MCF 10A (cell line): ENCODE measurements at regions of chr20 and their contacts with region 1.

Region 1: DNA sequence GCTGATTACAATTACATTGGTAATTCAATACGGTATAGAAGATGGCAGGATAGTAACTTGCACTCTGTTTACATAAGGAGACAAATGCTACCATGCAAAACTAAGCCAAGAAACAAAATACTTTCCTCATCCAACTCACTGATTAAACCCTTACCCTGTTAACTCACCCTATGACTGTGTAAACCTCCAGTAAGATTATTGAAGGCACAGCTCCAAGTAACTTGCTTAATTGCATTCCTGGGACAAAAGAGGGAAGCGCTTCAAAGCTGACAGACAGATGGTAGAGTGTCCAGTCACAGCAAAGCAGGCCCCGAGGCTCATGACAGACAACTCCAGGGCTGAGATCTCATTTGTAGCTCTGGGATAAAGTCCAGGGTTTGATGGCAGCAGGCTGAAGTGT is 6.9 kb upstream of the KIF16B start:
- DNase-seq: peak; percentile 92
- H3K4me3 Mint-ChIP-seq: peak overlapping the region; percentile 30
- H3K27ac Mint-ChIP-seq: peak overlapping the region; percentile 6
- H3K4me1 Mint-ChIP-seq: peaks cover 23% of the 10 kb centered on the region
- H3K27me3 Mint-ChIP-seq: no peaks in the 10 kb centered on the region
- CTCF ChIP-seq: no peak

Region 2: GRCh38 chr20:16528078-16528477 is 52.1 kb before region 1 on chr20:
- CTCF ChIA-PET with region 1: interaction called, 3 read pairs
- POLR2A ChIA-PET with region 1: interaction called, 35 read pairs
- intact Hi-C with region 1: no loop called
- DNase-seq: peak; percentile 94
- H3K4me3 Mint-ChIP-seq: peak overlapping the region; percentile 40
- H3K27ac Mint-ChIP-seq: peak overlapping the region; percentile 91
- H3K4me1 Mint-ChIP-seq: peaks cover 34% of the 10 kb centered on the region
- H3K27me3 Mint-ChIP-seq: no peaks in the 10 kb centered on the region
- CTCF ChIP-seq: no peak

Region 3: DNA sequence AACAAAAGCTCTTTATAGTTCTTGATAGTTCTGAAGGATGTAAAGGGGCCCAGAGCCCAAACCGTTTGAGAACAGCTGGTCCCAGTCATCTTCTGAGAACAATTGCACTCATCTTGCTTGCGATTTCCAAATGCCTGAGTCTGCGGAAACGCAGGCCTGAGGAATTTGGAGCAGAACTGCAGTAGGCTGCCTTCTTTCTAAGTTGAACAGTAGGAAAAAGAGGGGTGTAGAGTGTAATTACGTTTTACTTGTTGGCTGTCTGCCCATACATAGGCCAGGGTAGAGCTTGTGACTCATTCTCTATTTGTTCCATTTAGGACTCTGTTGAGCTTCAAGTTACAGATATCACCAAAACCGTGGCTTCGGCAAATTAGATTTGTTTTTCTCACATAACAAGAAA is 35.1 kb after region 1 on chr20:
- CTCF ChIA-PET with region 1: interaction called, 11 read pairs
- POLR2A ChIA-PET with region 1: interaction called, 17 read pairs
- intact Hi-C with region 1: loop called (anchors 2 kb)
- DNase-seq: peak; percentile 90
- H3K4me3 Mint-ChIP-seq: no peak overlapping the region
- H3K27ac Mint-ChIP-seq: peak overlapping the region; percentile 65
- H3K4me1 Mint-ChIP-seq: peaks cover 21% of the 10 kb centered on the region
- H3K27me3 Mint-ChIP-seq: no peaks in the 10 kb centered on the region
- CTCF ChIP-seq: no peak

Region 4: GRCh38 chr20:16729565-16730456 is 149.7 kb after region 1 on chr20 and contains the start of gene SNRPB2:
- CTCF ChIA-PET with region 1: no interaction called
- POLR2A ChIA-PET with region 1: interaction called, 9 read pairs
- intact Hi-C with region 1: loop called (anchors 2 kb)
- DNase-seq: peak; percentile 93
- H3K4me3 Mint-ChIP-seq: peak within 1 kb of the TSS; percentile 100
- H3K27ac Mint-ChIP-seq: peak within 1 kb of the TSS; percentile 100
- H3K4me1 Mint-ChIP-seq: peaks cover 16% of the 10 kb centered on the region
- H3K27me3 Mint-ChIP-seq: peaks cover 21% of the 10 kb centered on the region
- CTCF ChIP-seq: no peak
- total RNA-seq, gene SNRPB2: 57.7 and 74.3 TPM in 2 replicates